IMR-90 (cell line): ENCODE measurements at regions of chr12 and their contacts with region 1.

Region 1: GRCh38 chr12:121947981-121948380 is 29.6 kb downstream of the CFAP251 start:
- DNase-seq: peak; percentile 7
- ATAC-seq: no peak
- H3K4me3 ChIP-seq: no peak overlapping the region
- H3K27ac ChIP-seq: no peak overlapping the region
- H3K4me1 ChIP-seq: no peaks in the 10 kb centered on the region; the same call in 1 of the 2 replicates
- H3K27me3 ChIP-seq: no peaks in the 10 kb centered on the region
- CTCF ChIP-seq: no peak
- POLR2A ChIP-seq: no peak
- RAD21 ChIP-seq: no peak

Region 2: DNA sequence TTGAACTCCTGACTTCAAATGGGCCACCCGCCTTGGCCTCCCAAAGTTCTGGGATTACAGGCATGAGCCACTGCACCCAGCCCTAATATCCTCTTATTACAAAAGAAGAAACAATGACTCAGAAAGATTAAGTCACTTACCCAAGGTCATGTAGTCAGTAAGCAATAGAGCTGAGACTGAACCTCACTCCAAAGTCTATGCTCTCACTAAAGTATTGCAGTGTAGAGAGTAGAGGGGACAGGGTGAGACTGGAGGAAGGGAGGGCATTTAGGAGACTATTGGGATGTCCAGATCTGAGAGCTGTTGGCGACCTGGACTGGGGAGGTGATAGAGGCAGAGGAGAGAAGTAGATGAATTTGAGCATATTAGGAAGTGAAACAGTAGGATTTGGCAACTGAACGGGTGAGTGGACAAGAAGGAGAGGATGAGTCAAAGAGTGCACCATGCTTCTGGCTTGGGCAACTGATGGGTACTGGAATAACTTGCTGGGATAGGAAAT is 803.5 kb before region 1 on chr12:
- CTCF ChIA-PET with region 1: no interaction called
- POLR2A ChIA-PET with region 1: no interaction called
- dilution Hi-C with region 1: no loop called
- in situ Hi-C with region 1: no loop called
- intact Hi-C with region 1: no loop called
- DNase-seq: peak; percentile 46
- ATAC-seq: peak; percentile 61
- H3K4me3 ChIP-seq: no peak overlapping the region
- H3K27ac ChIP-seq: no peak overlapping the region
- H3K4me1 ChIP-seq: no peaks in the 10 kb centered on the region
- H3K27me3 ChIP-seq: no peaks in the 10 kb centered on the region; the same call in 1 of the 2 replicates
- CTCF ChIP-seq: no peak
- POLR2A ChIP-seq: no peak
- RAD21 ChIP-seq: no peak

Region 3: GRCh38 chr12:121925358-121925695 is 22.7 kb before region 1 on chr12:
- CTCF ChIA-PET with region 1: no interaction called
- POLR2A ChIA-PET with region 1: no interaction called
- dilution Hi-C with region 1: no loop called
- in situ Hi-C with region 1: no loop called
- intact Hi-C with region 1: loop called (anchors 1 kb)
- DNase-seq: peak; percentile 83
- ATAC-seq: peak; percentile 24
- H3K4me3 ChIP-seq: no peak overlapping the region
- H3K27ac ChIP-seq: peak overlapping the region; percentile 83
- H3K4me1 ChIP-seq: peaks cover 18% of the 10 kb centered on the region
- H3K27me3 ChIP-seq: no peaks in the 10 kb centered on the region
- CTCF ChIP-seq: no peak
- POLR2A ChIP-seq: no peak
- RAD21 ChIP-seq: no peak

Region 4: DNA sequence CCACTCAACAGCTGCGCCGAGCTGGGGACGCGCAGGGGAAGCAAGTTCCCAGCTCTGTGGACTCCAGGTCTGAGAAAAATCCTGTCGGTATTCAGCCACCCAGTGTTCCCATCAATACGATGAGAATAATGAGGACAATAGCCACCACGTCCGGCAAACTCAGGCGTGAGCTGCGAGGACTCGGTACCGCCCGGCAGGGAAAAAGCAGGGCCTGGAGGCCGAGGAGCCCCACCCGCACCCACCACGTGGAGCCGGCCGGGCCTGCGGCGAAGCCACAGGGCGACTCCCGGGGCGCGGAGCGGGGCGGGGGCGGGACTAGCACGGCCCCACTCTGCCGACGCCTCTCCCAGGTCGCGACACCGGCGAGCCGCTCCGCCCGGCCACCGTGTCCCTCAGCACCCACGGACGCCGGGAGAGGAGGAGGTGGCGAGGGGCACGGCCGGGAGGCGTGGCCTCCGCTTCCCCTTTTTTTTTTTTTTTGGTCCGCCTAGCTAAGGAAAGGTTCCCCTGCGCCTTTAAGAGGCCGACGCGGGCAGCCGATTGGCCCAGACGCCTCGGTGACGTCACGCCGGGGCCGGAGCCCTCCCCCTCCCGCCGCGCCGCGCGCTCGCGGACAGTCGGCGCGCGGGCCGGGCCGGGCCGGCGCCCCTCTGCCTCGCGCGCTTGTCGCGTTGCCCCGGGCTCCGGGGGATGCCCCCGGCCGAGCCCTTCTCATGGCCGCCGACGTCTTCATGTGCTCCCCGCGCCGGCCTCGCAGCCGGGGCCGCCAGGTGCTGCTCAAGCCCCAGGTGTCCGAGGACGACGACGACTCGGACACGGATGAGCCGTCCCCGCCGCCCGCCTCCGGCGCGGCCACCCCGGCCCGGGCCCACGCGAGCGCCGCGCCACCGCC is 130.4 kb after region 1 on chr12 and contains the start of gene MLXIP:
- CTCF ChIA-PET with region 1: no interaction called
- POLR2A ChIA-PET with region 1: no interaction called
- dilution Hi-C with region 1: no loop called
- in situ Hi-C with region 1: no loop called
- intact Hi-C with region 1: no loop called
- DNase-seq: peak; percentile 89
- ATAC-seq: peak; percentile 81
- H3K4me3 ChIP-seq: peak within 1 kb of the TSS; percentile 86
- H3K27ac ChIP-seq: peak within 1 kb of the TSS; percentile 62
- H3K4me1 ChIP-seq: peaks cover 10% of the 10 kb centered on the region
- H3K27me3 ChIP-seq: peaks cover 4% of the 10 kb centered on the region; the same call in 1 of the 2 replicates
- CTCF ChIP-seq: no peak
- POLR2A ChIP-seq: peak; percentile 95
- RAD21 ChIP-seq: peak; percentile 1; the same call in 1 of the 2 replicates
- total RNA-seq, gene MLXIP: 2.7 and 3.1 TPM in 2 replicates